CD8-positive, alpha-beta T cell (primary cell): ENCODE measurements at regions of chr2 and their contacts with region 1.

Region 1: DNA sequence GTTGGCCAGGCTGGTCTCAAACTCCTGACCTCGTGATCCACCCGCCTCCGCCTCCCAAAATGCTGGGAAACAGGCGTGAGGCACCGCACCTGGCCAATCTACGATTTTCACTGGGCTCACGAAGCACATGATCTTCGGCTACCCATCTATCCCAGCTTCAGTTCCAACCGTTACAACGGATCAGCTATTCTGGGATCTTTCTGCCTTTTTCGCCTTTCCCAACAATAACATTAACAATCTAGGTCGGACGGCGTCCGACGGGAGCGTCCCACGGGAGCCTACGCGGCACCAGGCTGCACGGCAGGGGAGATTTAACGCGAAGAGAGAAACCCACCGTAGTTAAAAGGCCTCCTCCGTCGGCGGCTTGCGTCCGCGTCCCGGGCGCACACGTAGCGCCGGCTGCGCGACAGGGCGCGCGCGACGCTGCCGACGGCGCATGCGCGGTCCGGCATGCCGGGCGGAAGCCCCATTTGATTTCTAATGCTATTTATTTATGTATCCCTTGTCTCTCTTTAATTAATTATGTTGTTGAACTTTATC is at the start of gene MSL3B:
- DNase-seq: peak; percentile 21 to 86 (median 60)
- ATAC-seq: peak; percentile 95
- H3K4me3 ChIP-seq: peak within 1 kb of the TSS; percentile 48 to 59
- H3K4me3 Mint-ChIP-seq: peak within 1 kb of the TSS; percentile 94
- H3K27ac ChIP-seq: peak within 1 kb of the TSS in 1 of 2 experiments; percentile 7
- H3K27ac Mint-ChIP-seq: peak within 1 kb of the TSS; percentile 90
- H3K4me1 ChIP-seq: no peaks in the 10 kb centered on the region
- H3K4me1 Mint-ChIP-seq: peaks cover 10% of the 10 kb centered on the region
- H3K27me3 ChIP-seq: peaks cover 0 to 3% of the 10 kb centered on the region in 2 experiments
- H3K27me3 Mint-ChIP-seq: peaks cover 15% of the 10 kb centered on the region
- CTCF ChIP-seq: no peak

Region 2: GRCh38 chr2:233854241-233854981 is 13.7 kb before region 1 on chr2 and contains the start of gene HJURP:
- CTCF ChIA-PET with region 1: interaction called, 10 read pairs
- POLR2A ChIA-PET with region 1: interaction called, 4 read pairs
- intact Hi-C with region 1: loop called (anchors 1 to 2 kb)
- DNase-seq: peak; percentile 74 to 93 (median 86)
- ATAC-seq: peak; percentile 96
- H3K4me3 ChIP-seq: peak within 1 kb of the TSS; percentile 66 to 75
- H3K4me3 Mint-ChIP-seq: peak within 1 kb of the TSS; percentile 92
- H3K27ac ChIP-seq: peak within 1 kb of the TSS; percentile 18 to 20
- H3K27ac Mint-ChIP-seq: peak within 1 kb of the TSS; percentile 66
- H3K4me1 ChIP-seq: peaks cover 5% of the 10 kb centered on the region
- H3K4me1 Mint-ChIP-seq: peaks cover 21% of the 10 kb centered on the region
- H3K27me3 ChIP-seq: peaks cover 4% of the 10 kb centered on the region in 2 experiments
- H3K27me3 Mint-ChIP-seq: peaks cover 3% of the 10 kb centered on the region
- CTCF ChIP-seq: no peak
- total RNA-seq, gene HJURP: 0.30 to 0.53 TPM

Region 3: GRCh38 chr2:233901367-233901766 is 33.3 kb after region 1 on chr2:
- CTCF ChIA-PET with region 1: no interaction called
- POLR2A ChIA-PET with region 1: no interaction called
- intact Hi-C with region 1: no loop called
- DNase-seq: no peak
- ATAC-seq: no peak
- H3K4me3 ChIP-seq: no peak overlapping the region
- H3K4me3 Mint-ChIP-seq: no peak overlapping the region
- H3K27ac ChIP-seq: no peak overlapping the region
- H3K27ac Mint-ChIP-seq: no peak overlapping the region
- H3K4me1 ChIP-seq: peaks cover 3% of the 10 kb centered on the region
- H3K4me1 Mint-ChIP-seq: peaks cover 15% of the 10 kb centered on the region
- H3K27me3 ChIP-seq: peaks cover 0 to 4% of the 10 kb centered on the region in 2 experiments
- H3K27me3 Mint-ChIP-seq: peaks cover 18% of the 10 kb centered on the region
- CTCF ChIP-seq: no peak